CD4-positive, alpha-beta memory T cell (primary cell): ENCODE measurements at regions of chr3 and their contacts with region 1.

Region 1: GRCh38 chr3:124620600-124621063 is 109.6 kb upstream of the UMPS start:
- DNase-seq: peak in 4 of 5 donors; percentile 9 to 19 (median 16)
- H3K4me3 ChIP-seq: peak overlapping the region in 1 of 2 donors; percentile 43
- H3K4me3 Mint-ChIP-seq: peak overlapping the region; percentile 65 to 85 (median 80)
- H3K27ac ChIP-seq: peak overlapping the region; percentile 36
- H3K27ac Mint-ChIP-seq: peak overlapping the region; percentile 62 to 95 (median 89)
- H3K4me1 ChIP-seq: peaks cover 23% of the 10 kb centered on the region
- H3K4me1 Mint-ChIP-seq: peaks cover 25 to 47% (median 32%) of the 10 kb centered on the region in 4 donors
- H3K27me3 ChIP-seq: no peaks in the 10 kb centered on the region
- H3K27me3 Mint-ChIP-seq: no peaks in the 10 kb centered on the region

Region 2: GRCh38 chr3:124584552-124585391 is 35.9 kb before region 1 on chr3:
- CTCF ChIA-PET with region 1: no interaction called
- POLR2A ChIA-PET with region 1: interaction called, 3 read pairs
- intact Hi-C with region 1: loop called (anchors 5 kb)
- DNase-seq: peak in 4 of 5 donors; percentile 36 to 49 (median 43)
- H3K4me3 ChIP-seq: peak overlapping the region; percentile 52 to 58
- H3K4me3 Mint-ChIP-seq: peak overlapping the region; percentile 87 to 92 (median 90)
- H3K27ac ChIP-seq: no peak overlapping the region
- H3K27ac Mint-ChIP-seq: peak overlapping the region; percentile 74 to 91 (median 82)
- H3K4me1 ChIP-seq: peaks cover 36% of the 10 kb centered on the region
- H3K4me1 Mint-ChIP-seq: peaks cover 17 to 41% (median 29%) of the 10 kb centered on the region in 4 donors
- H3K27me3 ChIP-seq: no peaks in the 10 kb centered on the region
- H3K27me3 Mint-ChIP-seq: peaks cover 5 to 16% of the 10 kb centered on the region in 2 donors

Region 3: DNA sequence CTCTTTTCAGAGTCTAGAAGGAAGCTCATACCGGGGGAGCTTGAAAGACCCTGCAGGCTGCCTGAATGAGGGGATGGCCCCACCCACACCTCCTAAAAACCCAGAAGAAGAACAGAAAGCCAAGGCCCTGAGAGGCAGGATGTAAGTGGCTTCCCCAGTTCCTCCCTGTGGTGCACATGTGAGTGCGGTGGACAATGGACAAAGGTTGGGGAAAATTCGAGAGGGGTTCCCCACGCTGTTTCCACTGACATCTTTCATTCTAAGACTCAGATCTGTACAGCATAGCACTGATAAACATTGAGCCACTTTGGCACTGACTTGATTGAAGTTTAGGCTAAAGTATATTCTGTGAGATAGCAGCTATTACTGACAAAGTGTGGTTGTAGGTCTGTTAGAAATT is 30.2 kb after region 1 on chr3:
- CTCF ChIA-PET with region 1: no interaction called
- POLR2A ChIA-PET with region 1: no interaction called
- intact Hi-C with region 1: no loop called
- DNase-seq: no peak
- H3K4me3 ChIP-seq: no peak overlapping the region
- H3K4me3 Mint-ChIP-seq: no peak overlapping the region
- H3K27ac ChIP-seq: no peak overlapping the region
- H3K27ac Mint-ChIP-seq: no peak overlapping the region
- H3K4me1 ChIP-seq: no peaks in the 10 kb centered on the region
- H3K4me1 Mint-ChIP-seq: peaks cover 0 to 2% (median 1%) of the 10 kb centered on the region in 4 donors
- H3K27me3 ChIP-seq: no peaks in the 10 kb centered on the region
- H3K27me3 Mint-ChIP-seq: no peaks in the 10 kb centered on the region

Region 4: GRCh38 chr3:125240496-125240895 is 619.9 kb after region 1 on chr3:
- CTCF ChIA-PET with region 1: no interaction called
- POLR2A ChIA-PET with region 1: no interaction called
- intact Hi-C with region 1: no loop called
- DNase-seq: no peak
- H3K4me3 ChIP-seq: no peak overlapping the region
- H3K4me3 Mint-ChIP-seq: no peak overlapping the region
- H3K27ac ChIP-seq: no peak overlapping the region
- H3K27ac Mint-ChIP-seq: no peak overlapping the region
- H3K4me1 ChIP-seq: no peaks in the 10 kb centered on the region
- H3K4me1 Mint-ChIP-seq: peaks cover 0 to 6% (median 3%) of the 10 kb centered on the region in 4 donors
- H3K27me3 ChIP-seq: no peaks in the 10 kb centered on the region
- H3K27me3 Mint-ChIP-seq: no peaks in the 10 kb centered on the region